ENCODE measurements at regions of chr2 and their contacts with region 1.

Region 1: GRCh38 chr2:20135631-20136050 is 84.2 kb upstream of the LAPTM4A start:
- DNase-seq: peak; percentile 63 to 83
- H3K4me3 ChIP-seq: no peak overlapping the region
- H3K27ac ChIP-seq: no peak overlapping the region
- H3K4me1 ChIP-seq: peaks cover 0 to 9% (median 6%) of the 10 kb centered on the region in 4 experiments; a peak in 6 of 7 replicates
- H3K27me3 ChIP-seq: peaks cover 0 to 7% (median 0%) of the 10 kb centered on the region in 4 experiments; a peak in 2 of 7 replicates
- CTCF ChIP-seq: peak; percentile 83 to 89 (median 84)
- EP300 ChIP-seq: 0 out of 3 replicates have a peak, but pooled peaks of 1 of the 2 experiments have one; percentile 49
- POLR2A ChIP-seq: no peak
- RAD21 ChIP-seq: peak; percentile 66 to 78

Region 2: DNA sequence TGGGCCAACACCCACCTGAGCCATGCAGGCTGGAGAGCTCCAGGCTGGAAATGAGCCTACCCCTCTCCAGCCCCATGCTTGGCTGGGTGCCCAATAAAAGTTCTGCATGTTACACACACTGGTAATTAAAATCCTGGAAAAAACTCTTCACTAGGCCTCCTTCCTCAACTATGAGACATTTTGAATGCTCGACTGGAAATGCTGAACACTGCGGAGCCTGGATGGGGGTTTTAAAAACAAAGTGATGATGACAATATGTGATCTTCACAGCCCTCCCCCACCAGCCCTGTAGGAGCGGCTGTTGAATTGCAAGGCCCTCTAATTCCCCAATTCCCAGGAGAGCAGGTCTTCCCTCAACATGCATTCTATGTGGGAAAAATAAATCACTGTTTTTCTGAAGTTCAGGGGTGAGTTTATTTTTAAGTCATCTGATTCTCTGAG is 413.1 kb before region 1 on chr2:
- CTCF ChIA-PET with region 1: no interaction called
- POLR2A ChIA-PET with region 1: no interaction called
- DNase-seq: no peak
- H3K4me3 ChIP-seq: no peak overlapping the region
- H3K27ac ChIP-seq: no peak overlapping the region
- H3K4me1 ChIP-seq: no peaks in the 10 kb centered on the region
- H3K27me3 ChIP-seq: no peaks in the 10 kb centered on the region
- CTCF ChIP-seq: no peak
- EP300 ChIP-seq: no peak
- POLR2A ChIP-seq: no peak
- RAD21 ChIP-seq: no peak

Region 3: GRCh38 chr2:20113980-20114954 is 21.4 kb before region 1 on chr2:
- CTCF ChIA-PET with region 1: interaction called, 19 read pairs
- POLR2A ChIA-PET with region 1: interaction called, 3 read pairs
- DNase-seq: no peak
- H3K4me3 ChIP-seq: no peak overlapping the region
- H3K27ac ChIP-seq: no peak overlapping the region
- H3K4me1 ChIP-seq: no peaks in the 10 kb centered on the region
- H3K27me3 ChIP-seq: no peaks in the 10 kb centered on the region
- CTCF ChIP-seq: no peak
- EP300 ChIP-seq: no peak
- POLR2A ChIP-seq: no peak
- RAD21 ChIP-seq: no peak

Region 4: DNA sequence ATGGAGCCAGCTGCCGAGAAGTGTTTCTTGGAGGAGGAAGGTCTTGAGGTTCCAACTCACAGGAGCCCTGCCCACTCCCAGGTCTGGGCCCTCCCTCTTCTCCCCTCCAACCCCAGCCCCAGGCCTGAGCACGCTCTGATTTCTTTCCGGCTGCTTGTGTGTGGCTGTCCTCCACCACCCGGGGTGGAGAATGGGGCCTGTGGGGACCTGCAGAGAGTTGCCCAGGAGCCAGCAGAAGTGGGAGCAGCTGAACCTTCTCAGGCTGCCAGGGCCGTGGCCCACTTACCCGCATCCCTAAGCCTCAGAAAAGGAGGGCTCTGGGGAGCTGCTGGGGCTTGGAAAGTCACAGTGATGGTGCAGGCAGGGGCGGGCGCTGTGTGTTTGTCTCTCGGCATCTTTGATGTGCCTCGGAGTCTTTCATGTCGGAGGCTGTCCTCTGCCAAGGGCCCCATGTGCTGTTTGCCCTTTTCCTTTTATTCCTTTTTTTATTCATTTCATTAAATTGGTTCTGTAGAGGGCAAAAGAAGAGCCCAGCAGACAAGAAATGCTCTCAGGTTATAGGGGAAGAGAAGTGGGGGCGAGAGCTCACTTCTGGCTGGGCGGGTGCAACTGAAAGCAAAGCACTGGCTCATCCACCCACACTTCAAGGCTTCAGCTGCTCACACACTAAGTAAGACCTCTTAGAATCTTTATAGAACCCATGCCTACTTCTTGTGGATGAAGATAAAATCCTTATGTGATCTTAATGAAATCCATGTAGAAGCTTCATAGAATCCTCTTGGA is 36.8 kb after region 1 on chr2:
- CTCF ChIA-PET with region 1: interaction called, 11 read pairs
- POLR2A ChIA-PET with region 1: no interaction called
- DNase-seq: no peak
- H3K4me3 ChIP-seq: no peak overlapping the region
- H3K27ac ChIP-seq: no peak overlapping the region
- H3K4me1 ChIP-seq: peaks cover 0 to 12% (median 3%) of the 10 kb centered on the region in 4 experiments; a peak in 3 of 7 replicates
- H3K27me3 ChIP-seq: no peaks in the 10 kb centered on the region
- CTCF ChIP-seq: no peak
- EP300 ChIP-seq: no peak
- POLR2A ChIP-seq: no peak
- RAD21 ChIP-seq: no peak

Region 5: GRCh38 chr2:20207051-20207450 is 71.4 kb after region 1 on chr2:
- CTCF ChIA-PET with region 1: interaction called, 32 read pairs
- POLR2A ChIA-PET with region 1: interaction called, 3 read pairs
- DNase-seq: no peak
- H3K4me3 ChIP-seq: no peak overlapping the region
- H3K27ac ChIP-seq: no peak overlapping the region
- H3K4me1 ChIP-seq: peaks cover 0 to 10% (median 0%) of the 10 kb centered on the region in 4 experiments; a peak in 2 of 7 replicates
- H3K27me3 ChIP-seq: no peaks in the 10 kb centered on the region
- CTCF ChIP-seq: no peak
- EP300 ChIP-seq: no peak
- POLR2A ChIP-seq: no peak
- RAD21 ChIP-seq: no peak

Region 6: DNA sequence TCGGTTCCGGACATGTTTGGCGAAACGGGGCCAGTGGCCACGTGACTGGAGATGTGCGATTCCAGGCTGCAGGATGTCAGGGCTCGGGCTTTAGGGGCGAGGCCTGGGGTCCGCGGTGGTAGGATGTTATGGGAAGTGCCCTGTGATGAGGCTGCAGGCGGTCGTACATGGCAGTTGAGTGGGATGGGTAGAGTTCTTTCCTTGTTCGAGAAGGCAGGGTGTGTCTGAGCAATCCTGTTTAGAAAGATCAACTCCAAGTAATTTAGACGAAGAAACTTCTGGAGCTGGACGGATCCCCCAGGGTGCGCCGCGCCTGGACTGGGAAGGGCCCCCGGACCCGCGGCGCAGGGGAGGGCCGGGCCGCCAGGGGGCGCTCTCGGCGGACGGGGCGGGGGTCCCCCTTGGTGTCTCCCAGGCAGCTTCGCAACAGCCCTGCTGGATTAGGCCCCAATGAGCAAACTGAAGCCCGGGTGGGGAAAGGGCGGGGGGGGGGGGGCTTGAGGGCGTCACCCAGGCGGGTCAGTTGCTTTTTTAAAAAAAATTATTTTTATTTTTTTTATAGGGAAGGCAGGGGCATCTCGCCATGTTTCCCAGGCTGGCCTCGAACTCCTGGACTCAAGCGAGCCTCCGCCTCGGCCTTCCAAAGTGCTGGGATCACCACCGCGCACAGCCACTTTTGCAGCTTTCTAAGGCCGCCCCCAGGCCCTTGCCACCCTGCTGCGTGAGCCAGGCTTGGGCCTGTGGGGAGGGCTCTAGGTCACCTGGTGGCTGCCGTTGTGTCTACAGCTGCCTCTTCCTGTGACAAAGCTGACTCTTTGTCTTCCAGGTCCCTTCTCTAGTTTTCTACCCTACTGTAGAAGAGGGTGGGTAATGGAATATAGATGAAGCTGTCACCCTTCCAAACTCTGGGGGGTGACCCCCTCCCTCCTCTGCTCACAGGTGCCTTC is 106.7 kb after region 1 on chr2:
- CTCF ChIA-PET with region 1: interaction called, 16 read pairs
- POLR2A ChIA-PET with region 1: no interaction called
- DNase-seq: peak in 1 of 2 experiments; percentile 93
- H3K4me3 ChIP-seq: no peak overlapping the region
- H3K27ac ChIP-seq: 0 out of 2 replicates have a peak overlapping the region, but pooled peaks have one; percentile 3
- H3K4me1 ChIP-seq: peaks cover 0 to 8% (median 2%) of the 10 kb centered on the region in 4 experiments; a peak in 5 of 7 replicates
- H3K27me3 ChIP-seq: no peaks in the 10 kb centered on the region; a peak in 1 of 7 replicates
- CTCF ChIP-seq: peak; percentile 63 to 91 (median 86)
- EP300 ChIP-seq: no peak
- POLR2A ChIP-seq: no peak
- RAD21 ChIP-seq: peak; percentile 29 to 52

Measured in H1 (cell line).